MCF 10A (cell line): ENCODE measurements at regions of chr22 and their contacts with region 1.

Region 1: GRCh38 chr22:35299673-35300497 is at the start of gene TOM1:
- DNase-seq: peak; percentile 99
- H3K4me3 Mint-ChIP-seq: peak within 1 kb of the TSS; percentile 94
- H3K27ac Mint-ChIP-seq: peak within 1 kb of the TSS; percentile 96
- H3K4me1 Mint-ChIP-seq: peaks cover 6% of the 10 kb centered on the region
- H3K27me3 Mint-ChIP-seq: no peaks in the 10 kb centered on the region
- CTCF ChIP-seq: no peak
- total RNA-seq, gene TOM1: 28.2 and 41.9 TPM in 2 replicates

Region 2: DNA sequence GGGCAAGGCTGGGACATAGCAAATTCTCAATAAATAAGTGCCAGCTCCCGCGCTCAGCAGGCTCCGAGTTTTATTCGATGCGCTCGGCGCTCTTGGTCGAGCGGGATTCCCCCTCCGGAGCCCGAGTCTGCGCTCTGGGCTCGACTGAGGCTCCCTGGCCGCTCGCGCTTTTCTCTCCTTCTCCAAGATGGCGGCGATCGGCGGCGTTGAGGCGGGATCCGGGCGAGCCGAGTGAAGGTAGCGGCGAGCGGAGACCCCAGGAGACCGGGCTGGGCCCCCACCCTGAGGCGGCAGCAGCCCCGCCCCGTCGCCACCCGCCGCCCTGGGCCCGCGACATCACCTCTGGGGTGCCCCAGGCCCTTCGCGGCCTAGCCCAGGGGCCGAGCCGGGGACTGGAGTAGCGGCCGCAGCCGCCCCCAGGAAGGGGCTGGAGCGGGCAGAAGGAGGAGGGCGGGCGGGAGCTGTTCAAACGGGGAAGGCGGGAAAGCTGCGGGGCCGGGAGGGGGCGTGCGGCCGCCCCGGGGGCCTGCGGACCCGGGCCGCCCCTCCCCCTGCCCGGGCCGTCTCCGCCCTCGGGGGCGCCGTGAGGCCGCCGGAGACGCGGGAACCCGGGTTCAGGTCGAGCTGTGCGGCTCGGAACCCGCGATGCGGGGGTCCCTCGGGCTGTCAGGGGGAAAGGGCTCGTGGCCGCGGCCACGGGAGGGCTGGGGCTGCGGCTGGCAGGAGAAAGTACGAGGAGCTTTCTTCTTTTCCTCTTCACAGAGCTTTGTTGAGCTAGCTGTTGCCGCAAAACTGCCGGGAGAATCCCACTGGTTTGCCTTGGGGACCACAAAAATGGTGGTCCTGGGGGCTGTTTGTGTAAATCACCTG is 42.3 kb before region 1 on chr22 and contains the start of gene HMGXB4:
- CTCF ChIA-PET with region 1: interaction called, 4 read pairs
- POLR2A ChIA-PET with region 1: interaction called, 16 read pairs
- intact Hi-C with region 1: no loop called
- DNase-seq: peak; percentile 86
- H3K4me3 Mint-ChIP-seq: peak within 1 kb of the TSS; percentile 78
- H3K27ac Mint-ChIP-seq: peak within 1 kb of the TSS; percentile 92
- H3K4me1 Mint-ChIP-seq: peaks cover 23% of the 10 kb centered on the region
- H3K27me3 Mint-ChIP-seq: no peaks in the 10 kb centered on the region
- CTCF ChIP-seq: no peak
- total RNA-seq, gene HMGXB4: 27.2 and 30.2 TPM in 2 replicates

Region 3: GRCh38 chr22:35288116-35288515 is 11.8 kb before region 1 on chr22:
- CTCF ChIA-PET with region 1: interaction called, 5 read pairs
- POLR2A ChIA-PET with region 1: interaction called, 13 read pairs
- intact Hi-C with region 1: no loop called
- DNase-seq: no peak
- H3K4me3 Mint-ChIP-seq: no peak overlapping the region
- H3K27ac Mint-ChIP-seq: no peak overlapping the region
- H3K4me1 Mint-ChIP-seq: no peaks in the 10 kb centered on the region
- H3K27me3 Mint-ChIP-seq: no peaks in the 10 kb centered on the region
- CTCF ChIP-seq: no peak

Region 4: GRCh38 chr22:35739076-35739930 is 439.4 kb after region 1 on chr22:
- CTCF ChIA-PET with region 1: no interaction called
- POLR2A ChIA-PET with region 1: no interaction called
- intact Hi-C with region 1: no loop called
- DNase-seq: no peak
- H3K4me3 Mint-ChIP-seq: no peak overlapping the region
- H3K27ac Mint-ChIP-seq: no peak overlapping the region
- H3K4me1 Mint-ChIP-seq: no peaks in the 10 kb centered on the region
- H3K27me3 Mint-ChIP-seq: no peaks in the 10 kb centered on the region
- CTCF ChIP-seq: peak; percentile 10